HEK293 (cell line): ENCODE measurements at regions of chr6 and their contacts with region 1.

Region 1: DNA sequence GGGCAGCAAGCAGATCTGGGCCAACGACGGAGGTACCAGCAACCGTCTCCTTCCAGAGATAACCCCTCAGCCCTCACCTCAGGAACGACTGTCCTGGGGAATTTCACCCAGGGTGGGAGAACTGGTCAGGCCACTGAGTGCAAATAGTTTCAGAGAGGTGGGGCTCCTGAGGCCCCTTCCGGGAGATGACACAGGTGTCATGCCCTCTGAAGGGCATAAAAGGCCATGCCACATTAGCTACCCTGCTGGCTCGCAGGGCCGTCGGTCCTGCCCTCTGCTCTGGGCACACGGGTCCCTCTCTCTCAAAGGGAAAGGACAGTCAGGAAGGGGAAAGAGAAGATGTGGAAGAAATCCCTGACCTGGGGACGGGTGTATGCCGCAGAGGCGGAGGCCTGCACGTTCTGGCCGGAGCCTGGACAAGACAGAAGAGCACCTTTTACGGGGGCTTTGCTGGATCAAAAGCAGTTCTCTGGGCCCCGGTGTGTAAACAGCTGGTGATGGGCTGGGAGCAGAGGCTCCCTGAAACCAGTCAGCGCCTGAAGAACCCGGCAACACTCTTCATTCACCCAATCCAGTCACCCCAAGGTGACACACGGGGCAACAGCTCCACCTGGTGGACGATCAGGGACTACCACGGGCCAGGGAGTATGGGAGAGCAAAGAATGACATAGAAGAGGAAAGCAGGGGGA is 6.4 kb upstream of the TAF8 start:
- H3K4me3 ChIP-seq: no peak overlapping the region
- H3K27ac ChIP-seq: no peak overlapping the region
- H3K4me1 ChIP-seq: peaks cover 18% of the 10 kb centered on the region
- CTCF ChIP-seq: peak; percentile 93

Region 2: GRCh38 chr6:41801380-41801779 is 242.6 kb before region 1 on chr6:
- CTCF ChIA-PET with region 1: interaction called, 46 read pairs
- POLR2A ChIA-PET with region 1: no interaction called
- H3K4me3 ChIP-seq: no peak overlapping the region
- H3K27ac ChIP-seq: no peak overlapping the region
- H3K4me1 ChIP-seq: no peaks in the 10 kb centered on the region
- CTCF ChIP-seq: no peak

Region 3: DNA sequence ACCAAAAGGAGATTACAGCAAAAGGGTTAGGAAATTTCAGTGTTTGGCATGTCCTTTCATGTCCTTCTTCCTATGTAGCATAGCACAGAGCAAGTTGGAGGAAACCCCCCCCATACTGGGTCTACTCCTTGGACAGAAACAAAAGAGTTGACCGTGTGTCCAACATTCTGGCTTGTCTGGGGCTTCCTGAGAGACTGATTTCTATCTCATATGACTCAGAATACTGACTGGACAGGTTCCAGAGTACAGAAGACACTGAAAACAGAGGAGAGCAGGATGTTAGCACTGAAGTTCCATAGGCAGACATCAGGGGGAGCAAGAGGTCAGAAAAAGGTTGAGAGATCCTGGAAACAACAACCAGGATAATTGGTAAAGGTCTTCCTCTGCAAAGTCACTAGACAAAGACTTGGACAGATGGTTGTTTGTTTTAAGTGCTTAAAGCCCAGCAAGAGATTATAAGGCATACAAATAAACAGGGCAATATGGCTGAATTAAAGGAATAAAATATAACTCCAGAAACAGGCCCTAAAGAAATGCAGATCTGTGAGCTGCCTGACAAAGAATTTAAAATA is 197.2 kb before region 1 on chr6:
- CTCF ChIA-PET with region 1: interaction called, 71 read pairs
- POLR2A ChIA-PET with region 1: no interaction called
- H3K4me3 ChIP-seq: no peak overlapping the region
- H3K27ac ChIP-seq: peak overlapping the region; percentile 32
- H3K4me1 ChIP-seq: no peaks in the 10 kb centered on the region
- CTCF ChIP-seq: peak; percentile 62

Region 4: DNA sequence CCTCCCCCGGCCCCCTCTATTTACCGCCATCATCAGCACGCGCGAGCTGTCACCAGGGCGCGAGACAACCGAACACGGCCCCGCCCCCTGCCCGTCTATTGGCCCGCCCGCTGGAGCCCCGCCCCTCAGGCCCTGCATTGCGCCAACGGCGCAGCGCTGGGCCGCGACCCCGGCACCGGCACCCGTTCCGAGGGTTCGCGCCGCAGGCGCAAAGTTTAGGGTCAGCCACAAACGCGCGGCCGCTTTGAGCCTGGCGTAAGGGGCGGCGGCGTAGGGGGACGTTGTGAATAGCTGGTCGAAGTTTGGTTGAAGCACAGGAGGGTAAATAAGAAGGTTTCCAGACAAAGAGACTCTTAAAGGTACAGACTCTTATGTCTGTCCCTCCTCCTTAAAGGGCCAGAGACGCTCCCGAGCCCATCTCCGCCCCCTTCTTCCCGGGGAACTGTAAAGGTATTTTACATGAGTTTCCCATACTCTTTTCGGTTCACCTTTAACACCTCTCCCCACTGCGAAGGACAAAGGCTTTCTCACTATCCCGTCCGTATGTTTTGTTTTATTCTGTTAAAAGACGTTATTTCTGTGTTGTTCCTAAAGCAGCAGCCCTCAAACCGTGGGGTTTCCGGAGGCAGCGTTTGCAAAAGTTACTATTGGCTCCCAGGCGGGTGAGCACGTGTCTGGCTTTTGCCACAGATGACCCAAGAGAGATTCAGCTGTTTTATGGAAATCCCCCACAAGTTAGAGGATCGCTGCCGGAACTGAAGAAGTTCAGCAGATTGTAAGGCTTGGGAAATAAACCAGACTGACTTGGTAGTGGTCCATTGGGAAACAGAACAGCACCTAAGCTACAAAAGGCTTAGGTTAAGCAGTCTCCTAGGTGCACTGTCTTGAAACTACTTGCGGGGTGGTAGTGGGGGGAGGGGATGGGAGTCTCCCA is 148.4 kb before region 1 on chr6 and contains the start of gene USP49:
- CTCF ChIA-PET with region 1: interaction called, 11 read pairs
- POLR2A ChIA-PET with region 1: interaction called, 11 read pairs
- H3K4me3 ChIP-seq: peak within 1 kb of the TSS; percentile 89
- H3K27ac ChIP-seq: peak within 1 kb of the TSS; percentile 61
- H3K4me1 ChIP-seq: peaks cover 9% of the 10 kb centered on the region; the same call in 1 of the 2 replicates
- CTCF ChIP-seq: no peak

Region 5: GRCh38 chr6:41929924-41930323 is 114.0 kb before region 1 on chr6:
- CTCF ChIA-PET with region 1: interaction called, 146 read pairs
- POLR2A ChIA-PET with region 1: no interaction called
- H3K4me3 ChIP-seq: no peak overlapping the region
- H3K27ac ChIP-seq: no peak overlapping the region
- H3K4me1 ChIP-seq: no peaks in the 10 kb centered on the region
- CTCF ChIP-seq: no peak

Region 6: DNA sequence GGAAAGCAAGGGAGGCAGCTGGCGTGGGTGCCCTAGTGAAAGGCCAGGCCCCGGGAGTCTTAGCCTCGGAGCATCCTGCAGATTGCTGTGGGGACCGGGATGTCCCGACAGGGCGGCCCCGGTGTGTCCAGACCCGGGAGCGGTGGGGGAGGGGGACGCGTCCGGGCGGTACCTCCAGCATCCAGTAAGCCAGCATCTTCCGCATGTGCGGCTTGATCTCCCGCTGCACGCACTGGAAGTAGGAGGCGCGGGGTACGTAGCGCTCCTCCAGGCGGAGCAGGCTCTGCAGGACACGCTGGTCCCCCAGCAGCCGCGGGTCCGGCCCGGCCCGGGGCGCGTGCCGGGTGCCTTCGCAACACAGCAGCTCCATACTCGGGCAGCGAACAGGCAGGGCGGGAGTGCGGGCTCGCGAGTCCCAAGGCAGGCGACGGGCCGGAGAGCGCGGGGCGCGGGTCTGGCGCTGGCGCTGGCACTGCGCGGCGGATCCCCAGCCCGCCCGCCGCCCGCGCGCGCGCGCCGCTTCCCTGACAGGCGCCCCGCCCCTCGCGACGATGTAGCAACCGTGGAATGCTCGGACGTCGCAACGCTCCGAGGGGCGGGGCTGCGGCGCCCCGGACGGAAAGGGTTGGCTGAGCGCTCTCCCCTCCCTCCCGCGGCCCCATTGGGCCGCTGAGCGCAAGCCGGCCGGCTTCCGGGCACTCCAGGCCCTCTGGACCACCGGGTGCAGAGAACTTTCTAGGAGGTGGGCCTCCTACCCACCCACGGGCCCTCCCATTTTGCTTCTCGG is 102.5 kb before region 1 on chr6 and contains the start of gene CCND3:
- CTCF ChIA-PET with region 1: interaction called, 146 read pairs
- POLR2A ChIA-PET with region 1: interaction called, 6 read pairs
- H3K4me3 ChIP-seq: peak within 1 kb of the TSS; percentile 83
- H3K27ac ChIP-seq: peak within 1 kb of the TSS; percentile 51; the same call in 1 of the 2 replicates
- H3K4me1 ChIP-seq: peaks cover 20% of the 10 kb centered on the region
- CTCF ChIP-seq: no peak

Region 7: GRCh38 chr6:42028234-42029061 is 15.5 kb before region 1 on chr6:
- CTCF ChIA-PET with region 1: interaction called, 58 read pairs
- POLR2A ChIA-PET with region 1: interaction called, 9 read pairs
- H3K4me3 ChIP-seq: no peak overlapping the region
- H3K27ac ChIP-seq: no peak overlapping the region
- H3K4me1 ChIP-seq: no peaks in the 10 kb centered on the region
- CTCF ChIP-seq: no peak